ENCODE measurements at regions of chr4 and their contacts with region 1.

Region 1: GRCh38 chr4:82900331-82901128 is at the start of gene THAP9:
- DNase-seq: peak; percentile 99
- H3K4me3 Mint-ChIP-seq: no peak within 1 kb of the TSS
- H3K27ac Mint-ChIP-seq: no peak within 1 kb of the TSS
- H3K4me1 Mint-ChIP-seq: peaks cover 29% of the 10 kb centered on the region
- H3K27me3 Mint-ChIP-seq: peaks cover 2% of the 10 kb centered on the region
- total RNA-seq, gene THAP9: 1.7 and 3.7 TPM in 2 replicates

Region 2: DNA sequence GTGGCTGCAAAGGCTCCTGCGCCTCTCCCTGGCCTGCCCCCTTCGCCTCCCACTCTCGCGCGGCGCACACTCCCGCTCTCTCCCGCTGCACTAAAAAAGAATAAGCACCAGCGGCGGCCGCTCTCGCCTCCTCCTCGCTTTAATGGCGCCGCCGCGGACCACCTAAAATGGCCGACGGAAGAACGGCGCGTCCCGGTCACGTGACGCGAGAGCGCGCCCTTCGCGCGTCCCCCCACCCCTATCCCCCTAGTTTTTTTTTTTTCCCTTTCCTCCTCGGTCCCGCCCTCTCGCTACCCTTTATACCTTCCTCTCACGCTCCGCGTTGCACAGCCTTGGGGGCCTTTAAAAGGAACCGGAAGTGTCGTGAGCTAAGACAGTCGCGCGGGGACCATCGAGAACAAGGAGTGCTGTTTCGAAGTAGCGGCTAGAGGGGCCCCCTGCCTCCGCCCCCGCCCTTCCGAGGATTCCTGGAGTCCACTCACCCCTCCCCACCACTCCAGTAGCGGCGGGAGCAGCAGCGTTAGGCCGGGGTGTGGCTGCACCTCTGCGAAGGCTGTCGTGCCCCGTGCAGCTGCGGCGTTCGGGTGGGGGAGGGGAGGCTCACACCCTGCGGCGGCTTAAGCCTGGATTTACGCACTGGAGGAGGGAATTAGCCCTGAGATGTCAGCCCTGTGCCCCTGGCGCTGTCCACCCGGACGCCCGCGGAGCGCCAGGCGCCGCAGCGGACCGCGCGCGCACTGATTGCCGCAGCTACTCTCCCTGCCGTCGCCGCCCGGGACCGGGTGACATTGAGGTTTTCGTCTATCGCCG is 526.5 kb before region 1 on chr4 and contains the start of gene HNRNPD:
- intact Hi-C with region 1: loop called (anchors 1 kb)
- DNase-seq: peak; percentile 97
- H3K4me3 Mint-ChIP-seq: peak within 1 kb of the TSS; percentile 91
- H3K27ac Mint-ChIP-seq: peak within 1 kb of the TSS; percentile 98
- H3K4me1 Mint-ChIP-seq: peaks cover 38% of the 10 kb centered on the region
- H3K27me3 Mint-ChIP-seq: no peaks in the 10 kb centered on the region
- total RNA-seq, gene HNRNPD: 481 and 492 TPM in 2 replicates

Region 3: GRCh38 chr4:82823062-82823461 is 77.5 kb before region 1 on chr4:
- intact Hi-C with region 1: no loop called
- DNase-seq: no peak
- H3K4me3 Mint-ChIP-seq: no peak overlapping the region
- H3K27ac Mint-ChIP-seq: no peak overlapping the region
- H3K4me1 Mint-ChIP-seq: peaks cover 12% of the 10 kb centered on the region
- H3K27me3 Mint-ChIP-seq: no peaks in the 10 kb centered on the region

Region 4: GRCh38 chr4:82851885-82852750 is 48.4 kb before region 1 on chr4:
- intact Hi-C with region 1: loop called (anchors 1 kb)
- DNase-seq: peak; percentile 79
- H3K4me3 Mint-ChIP-seq: no peak overlapping the region
- H3K27ac Mint-ChIP-seq: peak overlapping the region; percentile 9
- H3K4me1 Mint-ChIP-seq: peaks cover 7% of the 10 kb centered on the region
- H3K27me3 Mint-ChIP-seq: no peaks in the 10 kb centered on the region

Region 5: GRCh38 chr4:83012687-83013419 is 112.3 kb after region 1 on chr4:
- intact Hi-C with region 1: loop called (anchors 1 kb)
- DNase-seq: peak; percentile 99
- H3K4me3 Mint-ChIP-seq: peak overlapping the region; percentile 92
- H3K27ac Mint-ChIP-seq: peak overlapping the region; percentile 89
- H3K4me1 Mint-ChIP-seq: peaks cover 40% of the 10 kb centered on the region
- H3K27me3 Mint-ChIP-seq: peaks cover 1% of the 10 kb centered on the region

Region 6: DNA sequence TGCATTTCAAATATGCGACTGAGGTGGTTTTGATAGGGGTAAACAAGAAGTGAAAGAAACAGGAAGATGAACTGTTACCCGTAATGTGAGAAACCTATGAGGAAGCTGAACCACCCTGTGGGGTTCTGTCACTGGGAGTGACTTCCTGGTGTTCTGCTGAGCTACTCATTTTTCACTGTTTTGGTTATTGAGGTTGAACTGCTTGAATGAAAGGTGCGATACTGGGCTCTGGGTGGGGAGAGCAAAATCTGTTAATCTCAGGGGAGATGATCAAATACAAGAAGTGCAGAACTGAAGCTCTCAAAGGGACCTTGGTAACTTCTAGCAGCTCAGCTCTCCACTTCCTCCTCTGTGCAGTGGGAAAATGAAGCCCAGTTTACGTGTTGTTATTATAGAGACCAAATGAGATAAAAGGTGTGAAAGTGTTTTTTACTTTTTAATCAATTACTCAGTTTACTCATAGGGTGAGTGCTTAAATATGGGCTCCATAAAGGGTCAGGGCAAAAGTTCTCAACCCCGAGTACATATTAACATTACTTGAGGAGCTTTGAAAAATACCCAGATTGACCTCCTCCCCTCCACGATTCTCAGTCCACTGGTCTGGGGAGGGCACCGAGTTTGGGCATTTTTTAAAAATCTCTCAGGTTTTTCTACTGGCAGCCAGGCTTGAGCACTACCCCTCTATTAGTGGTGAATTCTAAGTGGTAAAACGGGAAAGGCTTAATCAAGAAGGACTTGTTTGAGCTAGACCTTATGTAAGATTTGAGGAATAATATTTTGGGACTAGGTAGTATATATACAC is 317.4 kb after region 1 on chr4:
- intact Hi-C with region 1: loop called (anchors 1 kb)
- DNase-seq: peak; percentile 92
- H3K4me3 Mint-ChIP-seq: peak overlapping the region; percentile 69
- H3K27ac Mint-ChIP-seq: peak overlapping the region; percentile 83
- H3K4me1 Mint-ChIP-seq: peaks cover 66% of the 10 kb centered on the region
- H3K27me3 Mint-ChIP-seq: no peaks in the 10 kb centered on the region

Region 7: GRCh38 chr4:83356899-83357661 is 456.6 kb after region 1 on chr4:
- intact Hi-C with region 1: loop called (anchors 2 kb)
- DNase-seq: no peak
- H3K4me3 Mint-ChIP-seq: peak overlapping the region; percentile 22
- H3K27ac Mint-ChIP-seq: peak overlapping the region; percentile 96
- H3K4me1 Mint-ChIP-seq: peaks cover 15% of the 10 kb centered on the region
- H3K27me3 Mint-ChIP-seq: no peaks in the 10 kb centered on the region

Region 8: DNA sequence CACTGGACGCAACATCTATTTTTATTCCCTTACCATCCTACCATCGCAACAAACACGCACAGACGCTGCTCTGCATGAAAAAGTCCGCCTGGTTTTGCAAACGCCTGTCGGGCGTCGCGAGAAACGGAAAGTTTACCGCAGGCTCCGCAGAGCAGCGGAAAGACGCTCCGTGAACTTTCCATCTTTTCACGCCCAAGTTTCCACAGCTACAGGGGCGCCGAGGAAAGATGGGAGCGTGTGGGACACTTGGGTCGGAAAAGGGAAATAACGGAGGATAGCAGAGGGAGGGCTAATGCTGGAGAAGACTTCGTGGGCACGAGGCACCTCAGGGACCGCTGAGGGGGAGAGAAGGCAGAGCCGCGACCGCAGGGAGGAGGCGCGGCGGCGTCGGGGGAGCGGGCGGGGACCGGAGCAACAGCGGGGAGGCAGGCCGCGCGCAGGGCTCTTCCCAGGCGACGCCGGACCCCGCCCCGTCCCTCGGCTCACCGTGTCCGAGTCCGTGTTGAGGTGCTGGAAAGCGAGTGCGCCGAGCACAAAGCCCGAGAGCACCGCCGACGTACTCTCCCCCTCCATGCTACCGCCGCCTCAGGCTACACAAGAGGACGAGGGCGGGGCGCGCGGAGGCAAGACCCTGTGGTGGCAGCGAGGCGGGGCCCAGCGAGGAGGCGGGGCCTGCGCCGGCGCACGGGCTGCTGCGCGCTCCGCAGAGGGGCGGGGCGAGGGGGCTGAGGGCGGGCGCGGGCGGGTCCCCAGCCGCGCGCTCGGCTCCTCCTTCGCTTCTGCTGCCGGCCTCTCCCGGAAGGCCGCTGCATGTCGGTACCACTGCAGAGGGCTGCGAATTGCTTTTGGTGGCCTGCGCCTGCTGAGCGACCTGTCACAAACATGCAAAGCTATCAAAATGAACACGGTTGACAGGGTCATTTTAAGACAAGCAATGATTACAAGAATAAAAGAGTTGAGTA is 584.3 kb after region 1 on chr4 and contains the start of gene ABRAXAS1:
- intact Hi-C with region 1: loop called (anchors 2 kb)
- DNase-seq: peak; percentile 98
- H3K4me3 Mint-ChIP-seq: peak within 1 kb of the TSS; percentile 96
- H3K27ac Mint-ChIP-seq: peak within 1 kb of the TSS; percentile 95
- H3K4me1 Mint-ChIP-seq: peaks cover 7% of the 10 kb centered on the region
- H3K27me3 Mint-ChIP-seq: no peaks in the 10 kb centered on the region
- total RNA-seq, gene ABRAXAS1: 10.4 and 12.0 TPM in 2 replicates

Measured in activated CD4-positive, alpha-beta T cell treated with anti-CD3 and anti-CD28 coated beads, Interleukin-2, amount 10 ng/mL, durations not matched to agents 24 days and 14 days (primary cell).